Ascending aorta (tissue), 2 donors: ENCODE measurements at regions of chr4 and their contacts with region 1.

Region 1: DNA sequence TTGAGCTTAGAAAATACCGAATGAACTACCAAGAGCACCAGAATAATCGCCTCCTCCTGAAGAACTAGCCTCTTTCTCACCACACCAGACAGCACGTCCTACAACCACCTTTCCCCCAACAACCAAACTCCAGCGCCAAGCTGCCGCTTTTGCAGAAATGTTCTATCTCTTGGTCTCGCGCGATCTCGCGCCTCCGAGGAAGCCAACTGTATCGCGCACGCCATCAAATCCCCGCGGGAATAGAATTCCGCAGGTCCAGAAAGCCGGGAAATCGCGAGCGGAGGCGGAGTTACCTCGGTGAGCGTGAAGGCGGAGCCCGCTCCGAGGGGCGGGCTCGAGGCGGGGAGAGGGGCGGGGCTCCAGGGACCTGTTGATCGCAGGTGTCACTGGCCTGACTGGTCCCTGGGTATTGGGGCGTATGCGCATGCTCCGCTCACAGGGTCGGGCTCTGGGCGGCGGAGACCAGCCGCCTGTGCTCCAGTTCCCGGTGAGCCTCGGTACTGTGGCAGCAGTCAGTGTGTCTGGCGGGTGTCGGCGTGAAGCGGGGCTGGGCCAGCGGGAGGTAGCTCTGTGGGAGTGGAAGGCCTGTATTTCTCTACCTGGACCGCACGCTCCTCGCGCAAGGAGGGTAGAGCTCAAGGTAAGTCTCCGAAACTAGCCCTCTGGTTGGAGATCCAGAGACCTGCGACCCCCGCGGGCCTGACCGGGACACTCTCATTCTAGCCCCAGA is at the start of gene USP53:
- DNase-seq: peak; percentile 94 to 99
- H3K4me3 ChIP-seq: peak within 1 kb of the TSS; percentile 84 to 91
- H3K27ac ChIP-seq: peak within 1 kb of the TSS; percentile 98
- H3K4me1 ChIP-seq: peaks cover 0 to 4% of the 10 kb centered on the region in 2 donors
- H3K27me3 ChIP-seq: no peaks in the 10 kb centered on the region
- CTCF ChIP-seq: peak in 1 of 3 experiments; percentile 8
- total RNA-seq, gene USP53: 75.4 TPM

Region 2: DNA sequence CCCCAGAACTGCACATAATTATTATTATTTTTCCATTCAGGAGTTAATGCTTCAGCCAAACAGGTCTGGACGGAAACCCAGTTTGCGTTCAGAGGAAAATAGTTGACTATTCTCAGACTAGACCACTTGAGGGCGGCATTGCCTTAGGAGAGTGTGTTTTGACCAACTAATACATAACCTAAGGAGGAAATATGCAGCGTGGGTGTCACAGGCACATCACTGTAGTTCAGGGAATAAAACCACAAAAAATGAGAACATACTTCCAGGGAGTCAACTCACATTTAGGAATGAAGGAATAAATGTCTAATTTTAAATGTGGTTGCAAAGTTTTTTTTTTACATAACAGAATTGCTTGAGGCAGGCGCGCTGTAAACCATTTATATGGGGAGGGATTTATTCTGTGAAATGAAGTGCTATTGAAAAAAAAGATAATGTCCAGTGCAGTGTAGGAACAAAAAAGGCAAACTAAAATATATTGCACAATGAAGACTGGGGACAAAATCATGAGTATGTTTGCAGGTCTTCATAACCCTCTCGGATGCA is 230.5 kb before region 1 on chr4:
- intact Hi-C with region 1: loop called (anchors 1 kb)
- DNase-seq: peak in 1 of 2 donors; percentile 89
- H3K4me3 ChIP-seq: no peak overlapping the region
- H3K27ac ChIP-seq: peak overlapping the region; percentile 95 to 96
- H3K4me1 ChIP-seq: peaks cover 30 to 65% of the 10 kb centered on the region in 2 donors
- H3K27me3 ChIP-seq: no peaks in the 10 kb centered on the region
- CTCF ChIP-seq: peak; percentile 68 to 90 (median 82)

Region 3: GRCh38 chr4:119103263-119103662 is 109.1 kb before region 1 on chr4:
- intact Hi-C with region 1: loop called (anchors 1 kb)
- DNase-seq: peak in 1 of 2 donors; percentile 87
- H3K4me3 ChIP-seq: no peak overlapping the region
- H3K27ac ChIP-seq: peak overlapping the region; percentile 81
- H3K4me1 ChIP-seq: peaks cover 0 to 47% of the 10 kb centered on the region in 2 donors
- H3K27me3 ChIP-seq: no peaks in the 10 kb centered on the region
- CTCF ChIP-seq: no peak

Region 4: DNA sequence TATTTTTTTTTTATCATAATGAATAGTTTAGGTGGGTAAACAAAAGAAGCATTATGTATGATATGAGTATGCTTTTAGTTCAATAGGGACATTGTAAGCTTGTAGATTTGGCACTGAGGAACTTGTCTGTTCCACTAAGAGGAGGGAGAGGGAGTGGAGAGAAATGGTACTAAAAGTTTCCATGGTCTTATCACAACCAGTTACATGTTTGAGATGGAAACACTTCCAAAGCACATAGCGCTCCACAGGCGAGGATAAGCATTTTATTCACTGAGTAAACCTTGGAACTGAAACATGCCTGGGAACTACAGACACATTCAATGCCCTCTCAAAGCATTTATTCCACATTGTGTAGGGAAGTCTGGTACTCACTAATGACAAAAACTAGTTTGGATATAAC is 61.2 kb before region 1 on chr4:
- intact Hi-C with region 1: loop called (anchors 2 kb)
- DNase-seq: no peak
- H3K4me3 ChIP-seq: no peak overlapping the region
- H3K27ac ChIP-seq: peak overlapping the region; percentile 14 to 30
- H3K4me1 ChIP-seq: peaks cover 0 to 2% of the 10 kb centered on the region in 2 donors
- H3K27me3 ChIP-seq: no peaks in the 10 kb centered on the region
- CTCF ChIP-seq: peak in 1 of 3 experiments; percentile 21

Region 5: DNA sequence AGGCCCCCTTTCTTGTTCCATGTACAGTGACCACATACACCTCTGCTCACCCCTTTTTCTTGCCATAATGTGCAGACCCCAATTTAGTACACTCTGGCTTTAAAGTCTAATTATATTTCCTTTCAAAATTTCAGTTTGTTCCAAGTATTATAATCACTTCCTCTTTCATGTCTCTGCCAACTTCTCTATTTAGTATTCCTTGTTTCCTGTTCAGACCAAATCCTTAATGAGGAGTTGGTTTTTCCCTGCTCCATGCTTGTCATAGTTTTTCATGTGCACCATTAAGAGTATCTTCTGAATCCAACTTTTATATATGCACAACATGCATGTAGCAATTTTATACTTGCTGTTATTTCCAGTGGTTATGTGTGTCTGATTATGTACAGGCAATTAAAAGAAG is 32.4 kb after region 1 on chr4:
- intact Hi-C with region 1: no loop called
- DNase-seq: no peak
- H3K4me3 ChIP-seq: no peak overlapping the region
- H3K27ac ChIP-seq: no peak overlapping the region
- H3K4me1 ChIP-seq: peaks cover 0 to 12% of the 10 kb centered on the region in 2 donors
- H3K27me3 ChIP-seq: no peaks in the 10 kb centered on the region
- CTCF ChIP-seq: no peak

Region 6: GRCh38 chr4:119286377-119287002 is 74.1 kb after region 1 on chr4:
- intact Hi-C with region 1: loop called (anchors 2 kb)
- DNase-seq: no peak
- H3K4me3 ChIP-seq: no peak overlapping the region
- H3K27ac ChIP-seq: peak overlapping the region; percentile 28 to 76
- H3K4me1 ChIP-seq: peaks cover 0 to 24% of the 10 kb centered on the region in 2 donors
- H3K27me3 ChIP-seq: no peaks in the 10 kb centered on the region
- CTCF ChIP-seq: peak; percentile 58 to 74 (median 71)